ENCODE measurements at regions of chr16 and their contacts with region 1.

Region 1: DNA sequence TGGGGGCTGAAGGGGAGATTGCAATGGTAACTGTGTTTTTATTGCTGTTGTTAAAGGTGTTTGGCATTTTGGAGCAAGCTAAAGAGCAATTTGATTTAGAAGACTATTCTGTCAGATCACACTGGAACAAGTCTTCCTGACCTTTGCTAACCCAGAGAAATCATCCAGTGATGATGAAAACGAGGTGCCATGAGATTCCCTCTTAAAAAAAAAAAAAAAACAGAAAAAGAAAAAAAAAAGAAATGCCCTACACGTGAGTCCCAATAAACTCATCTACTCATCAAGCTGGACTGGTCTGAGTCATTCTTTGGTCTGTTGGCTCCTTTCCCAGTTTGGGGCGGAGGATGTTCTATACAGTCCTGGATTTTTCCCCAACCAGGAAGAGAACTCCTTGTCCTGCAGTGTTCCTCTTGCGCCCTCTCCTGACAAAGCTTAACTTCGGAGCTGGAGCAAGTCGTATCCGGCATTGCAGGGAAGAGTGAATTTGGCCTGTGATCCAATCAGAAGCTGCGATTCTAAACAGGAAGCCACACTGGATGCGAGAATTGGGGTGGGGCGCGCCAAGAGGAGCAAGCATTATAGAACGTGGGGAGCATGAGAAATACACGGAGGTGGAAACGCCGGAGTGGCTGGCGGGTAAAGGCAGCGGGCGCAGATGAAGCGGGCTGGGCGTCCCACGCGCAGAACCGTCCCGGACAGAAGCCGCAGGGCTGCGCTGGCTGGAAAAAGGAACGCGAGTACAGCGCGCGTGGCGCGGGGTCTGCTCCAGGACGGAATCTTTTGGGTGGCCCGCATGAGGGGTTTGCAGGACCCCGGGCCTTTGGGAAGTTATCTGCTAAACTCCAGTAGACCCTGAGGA is 22.4 kb upstream of the CRYM start:
- DNase-seq: peak; percentile 42
- H3K4me3 Mint-ChIP-seq: peak overlapping the region; percentile 88
- H3K27ac Mint-ChIP-seq: peak overlapping the region; percentile 56
- H3K4me1 Mint-ChIP-seq: peaks cover 26% of the 10 kb centered on the region
- H3K27me3 Mint-ChIP-seq: peaks cover 32% of the 10 kb centered on the region

Region 2: GRCh38 chr16:20741554-20742285 is 558.8 kb before region 1 on chr16 and contains the start of gene THUMPD1:
- intact Hi-C with region 1: loop called (anchors 1 kb)
- DNase-seq: peak; percentile 90
- H3K4me3 Mint-ChIP-seq: peak within 1 kb of the TSS; percentile 97
- H3K27ac Mint-ChIP-seq: peak within 1 kb of the TSS; percentile 95
- H3K4me1 Mint-ChIP-seq: peaks cover 11% of the 10 kb centered on the region
- H3K27me3 Mint-ChIP-seq: no peaks in the 10 kb centered on the region
- total RNA-seq, gene THUMPD1: 42.4 and 43.3 TPM in 2 replicates

Region 3: DNA sequence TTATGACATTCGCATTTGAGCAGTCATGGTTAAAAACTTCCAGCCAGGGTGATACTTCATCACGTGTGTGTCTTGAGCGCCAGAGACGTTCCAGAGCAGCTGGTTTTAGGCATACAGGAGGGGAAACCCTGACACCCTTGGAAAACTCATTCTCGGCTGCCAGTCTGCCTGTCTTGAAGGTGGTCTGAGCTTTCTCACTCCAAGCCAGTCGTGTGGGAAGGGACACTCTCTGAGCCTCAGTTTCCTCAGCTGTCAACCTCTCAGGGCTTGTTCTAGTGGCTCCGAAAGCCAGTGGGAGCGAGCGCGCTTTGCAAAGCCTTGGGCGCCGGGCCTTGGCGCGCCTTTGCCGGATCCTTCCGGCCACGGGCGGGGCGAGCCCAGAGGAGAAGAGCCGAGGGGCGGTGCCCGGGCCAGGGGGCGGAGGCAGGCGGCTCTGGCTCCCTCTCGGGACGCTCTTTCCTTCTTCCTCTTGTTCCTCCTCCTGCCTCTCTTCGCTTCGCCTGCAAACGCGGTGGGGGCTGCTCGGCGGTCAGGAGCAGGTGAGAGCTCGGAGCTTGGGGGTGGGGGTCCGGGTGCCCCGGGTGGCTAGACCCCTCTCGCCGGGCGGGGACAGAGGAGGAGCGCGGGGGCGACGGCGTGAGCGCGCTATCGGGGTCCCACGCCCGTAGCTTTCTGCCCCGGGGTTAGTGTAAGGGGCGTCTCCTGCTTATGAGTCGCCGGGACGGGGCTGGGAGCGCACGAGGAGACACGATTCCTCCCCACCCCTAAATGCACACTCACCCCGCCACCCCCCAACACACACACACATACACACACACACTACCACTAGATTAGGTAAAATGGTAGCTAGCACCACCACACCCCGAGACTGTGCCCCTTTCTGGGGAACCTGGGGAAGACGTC is 142.1 kb before region 1 on chr16 and contains the start of gene LDAF1:
- intact Hi-C with region 1: loop called (anchors 1 kb)
- DNase-seq: peak; percentile 75
- H3K4me3 Mint-ChIP-seq: peak within 1 kb of the TSS; percentile 92
- H3K27ac Mint-ChIP-seq: peak within 1 kb of the TSS; percentile 11
- H3K4me1 Mint-ChIP-seq: peaks cover 8% of the 10 kb centered on the region
- H3K27me3 Mint-ChIP-seq: no peaks in the 10 kb centered on the region
- total RNA-seq, gene LDAF1: 6.5 and 6.6 TPM in 2 replicates

Region 4: DNA sequence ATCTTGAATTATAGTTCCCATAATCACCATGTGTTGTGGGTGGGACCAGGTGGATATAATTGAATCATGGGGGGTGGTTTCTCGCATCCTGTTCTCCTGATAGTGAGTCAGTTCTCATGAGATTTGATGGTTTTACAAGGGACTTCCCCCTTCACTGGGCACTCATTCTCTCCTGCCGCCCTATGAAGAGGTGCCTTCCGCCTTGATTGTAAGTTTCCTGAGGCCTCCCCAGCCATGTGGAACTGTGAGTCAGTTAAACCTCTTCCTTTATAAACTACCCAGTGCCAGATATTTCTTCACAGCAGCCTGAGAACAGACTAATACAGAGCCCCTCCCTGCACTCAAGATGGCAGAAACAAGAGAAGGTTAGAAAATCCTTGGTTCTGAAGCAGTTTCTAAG is 115.7 kb before region 1 on chr16:
- intact Hi-C with region 1: loop called (anchors 1 kb)
- DNase-seq: no peak
- H3K4me3 Mint-ChIP-seq: no peak overlapping the region
- H3K27ac Mint-ChIP-seq: no peak overlapping the region
- H3K4me1 Mint-ChIP-seq: peaks cover 5% of the 10 kb centered on the region
- H3K27me3 Mint-ChIP-seq: peaks cover 5% of the 10 kb centered on the region

Region 5: GRCh38 chr16:21233521-21234150 is 66.9 kb before region 1 on chr16 and contains the start of gene ANKS4B:
- intact Hi-C with region 1: no loop called
- DNase-seq: no peak
- H3K4me3 Mint-ChIP-seq: no peak within 1 kb of the TSS
- H3K27ac Mint-ChIP-seq: no peak within 1 kb of the TSS
- H3K4me1 Mint-ChIP-seq: no peaks in the 10 kb centered on the region
- H3K27me3 Mint-ChIP-seq: peaks cover 11% of the 10 kb centered on the region
- total RNA-seq, gene ANKS4B: not detected in 2 replicates

Region 6: DNA sequence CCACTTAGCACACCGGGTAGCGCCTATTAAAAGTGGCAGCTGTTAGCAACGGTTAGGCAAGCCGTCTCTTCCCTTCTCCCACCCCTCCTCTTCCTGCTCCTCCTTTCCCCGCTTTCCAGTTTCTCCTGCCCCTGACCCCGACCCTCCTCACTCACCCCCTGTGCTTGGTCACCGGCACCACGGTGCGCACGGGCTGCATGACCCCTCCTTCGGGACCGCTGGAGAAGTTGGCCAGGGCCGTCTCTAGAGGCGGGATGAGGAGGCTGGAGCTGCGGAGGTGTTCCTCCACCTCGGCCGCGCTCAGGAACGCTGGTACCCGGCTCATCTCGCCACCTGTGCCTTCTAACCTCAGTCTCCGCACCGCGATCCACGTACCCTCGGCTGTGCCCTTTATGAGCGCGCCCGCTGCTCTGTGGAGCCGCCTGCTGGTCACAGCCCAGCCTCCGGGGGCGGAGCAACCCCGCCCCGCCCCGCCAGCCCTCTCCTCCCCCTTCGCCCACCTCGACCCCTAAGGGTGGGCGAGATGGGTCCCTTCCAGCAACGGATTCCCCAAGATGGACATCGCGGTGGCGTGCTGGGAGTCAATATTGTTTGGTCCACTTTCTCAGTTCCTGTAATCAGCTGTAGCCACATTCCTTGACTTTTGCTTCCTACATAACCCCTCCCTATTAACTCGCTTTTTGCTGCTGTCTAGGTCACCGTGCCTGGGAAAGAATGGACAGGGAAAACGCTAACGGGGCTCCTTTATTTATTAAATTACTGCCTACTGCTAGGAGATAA is 22.4 kb before region 1 on chr16 and contains the start of gene CRYM:
- intact Hi-C with region 1: loop called (anchors 2 kb)
- DNase-seq: peak; percentile 26
- H3K4me3 Mint-ChIP-seq: no peak within 1 kb of the TSS
- H3K27ac Mint-ChIP-seq: no peak within 1 kb of the TSS
- H3K4me1 Mint-ChIP-seq: no peaks in the 10 kb centered on the region
- H3K27me3 Mint-ChIP-seq: peaks cover 56% of the 10 kb centered on the region
- total RNA-seq, gene CRYM: not detected in 2 replicates

Measured in activated T-helper 1 cell treated with anti-CD3 and anti-CD28 coated beads, Interleukin-12 subunit alpha, Interleukin-12 subunit beta, Interleukin-2, Interleukin-4 antibody, amounts not matched to agents 30 ng/mL and 10 ng/mL and 1 ng/mL, durations not matched to agents 14 hours and 24 hours and 36 hours (primary cell).